CD4-positive, alpha-beta T cell (primary cell): ENCODE measurements at regions of chr16 and their contacts with region 1.

Region 1: DNA sequence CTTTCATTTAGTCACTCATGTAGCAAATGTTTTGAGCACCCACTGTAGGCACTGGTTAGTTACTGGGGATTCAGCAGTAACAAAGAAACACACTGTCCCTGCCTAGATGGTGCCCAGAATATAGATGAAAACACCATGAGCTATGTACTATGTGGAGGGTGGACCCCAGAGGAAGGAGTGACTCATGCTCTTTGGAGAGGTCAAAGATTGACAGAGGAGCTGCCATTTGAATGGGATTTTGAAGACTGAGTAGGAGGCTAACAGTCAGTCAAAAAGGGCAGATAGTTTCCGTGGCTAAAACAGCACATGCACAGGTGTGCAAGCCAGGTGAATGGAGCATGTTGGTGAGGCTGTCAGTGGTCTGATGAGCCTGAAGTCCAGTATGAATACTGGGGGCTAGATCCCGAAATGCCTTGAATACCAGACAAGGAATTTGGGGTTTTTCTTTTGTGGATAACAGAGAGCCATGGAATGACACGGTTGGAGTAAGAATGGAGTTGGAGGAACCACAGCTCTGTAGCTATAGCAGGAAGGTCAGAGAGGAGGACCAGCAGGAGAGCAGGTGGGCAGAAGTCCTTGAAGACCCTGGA is 6.1 kb downstream of the IL21R start:
- DNase-seq: peak in 6 of 14 experiments; percentile 20 to 57 (median 50)
- ATAC-seq: peak; percentile 24
- H3K4me3 ChIP-seq: peak overlapping the region; percentile 2
- H3K4me3 Mint-ChIP-seq: peak overlapping the region; percentile 72
- H3K27ac ChIP-seq: peak overlapping the region; percentile 9 to 39
- H3K27ac Mint-ChIP-seq: peak overlapping the region; percentile 90
- H3K4me1 ChIP-seq: peaks cover 56% of the 10 kb centered on the region
- H3K4me1 Mint-ChIP-seq: peaks cover 96% of the 10 kb centered on the region
- H3K27me3 ChIP-seq: no peaks in the 10 kb centered on the region
- H3K27me3 Mint-ChIP-seq: no peaks in the 10 kb centered on the region
- CTCF ChIP-seq: no peak

Region 2: DNA sequence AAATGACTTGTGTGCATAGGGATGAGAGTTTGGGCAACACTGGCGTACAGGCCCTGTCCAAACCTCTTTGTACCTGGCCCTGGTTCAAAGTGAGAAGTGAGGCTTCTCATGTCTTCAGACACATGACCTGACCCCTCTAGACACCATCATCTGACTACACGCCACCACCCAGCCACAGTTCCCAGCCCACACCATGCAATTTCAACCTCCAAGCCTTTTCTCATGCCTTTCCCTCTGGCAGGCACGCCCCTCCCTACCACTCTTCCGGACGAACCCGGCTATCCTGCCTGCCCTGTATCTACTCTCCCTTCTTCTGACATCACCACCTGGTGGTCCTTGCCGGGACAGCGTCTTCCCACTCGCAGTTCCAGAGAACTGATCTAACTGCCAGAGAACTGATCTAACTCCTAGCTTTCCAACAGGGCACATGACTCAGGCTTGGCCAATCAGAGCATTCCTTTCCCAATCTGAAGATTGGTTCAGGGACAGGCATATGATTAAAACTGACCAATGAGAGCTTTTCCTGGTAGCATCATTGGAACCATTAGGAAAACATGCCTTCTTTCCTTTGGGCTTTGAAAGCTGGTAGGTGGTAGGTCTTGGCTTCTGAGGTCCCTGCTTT is 33.2 kb before region 1 on chr16:
- CTCF ChIA-PET with region 1: no interaction called
- POLR2A ChIA-PET with region 1: interaction called, 134 read pairs
- intact Hi-C with region 1: loop called (anchors 2 kb)
- DNase-seq: peak in 9 of 14 experiments; percentile 23 to 71 (median 42)
- ATAC-seq: peak; percentile 52
- H3K4me3 ChIP-seq: no peak overlapping the region
- H3K4me3 Mint-ChIP-seq: no peak overlapping the region
- H3K27ac ChIP-seq: no peak overlapping the region
- H3K27ac Mint-ChIP-seq: no peak overlapping the region
- H3K4me1 ChIP-seq: peaks cover 76% of the 10 kb centered on the region
- H3K4me1 Mint-ChIP-seq: peaks cover 39% of the 10 kb centered on the region
- H3K27me3 ChIP-seq: no peaks in the 10 kb centered on the region
- H3K27me3 Mint-ChIP-seq: no peaks in the 10 kb centered on the region
- CTCF ChIP-seq: peak; percentile 29

Region 3: GRCh38 chr16:27426423-27427408 is 18.6 kb after region 1 on chr16:
- CTCF ChIA-PET with region 1: interaction called, 3 read pairs
- POLR2A ChIA-PET with region 1: interaction called, 8 read pairs
- intact Hi-C with region 1: loop called (anchors 1 to 2 kb)
- DNase-seq: peak; percentile 47 to 86 (median 76)
- ATAC-seq: peak; percentile 94
- H3K4me3 ChIP-seq: no peak overlapping the region
- H3K4me3 Mint-ChIP-seq: no peak overlapping the region
- H3K27ac ChIP-seq: peak overlapping the region; percentile 1 to 13
- H3K27ac Mint-ChIP-seq: peak overlapping the region; percentile 69
- H3K4me1 ChIP-seq: peaks cover 34% of the 10 kb centered on the region
- H3K4me1 Mint-ChIP-seq: peaks cover 61% of the 10 kb centered on the region
- H3K27me3 ChIP-seq: no peaks in the 10 kb centered on the region
- H3K27me3 Mint-ChIP-seq: no peaks in the 10 kb centered on the region
- CTCF ChIP-seq: no peak

Region 4: DNA sequence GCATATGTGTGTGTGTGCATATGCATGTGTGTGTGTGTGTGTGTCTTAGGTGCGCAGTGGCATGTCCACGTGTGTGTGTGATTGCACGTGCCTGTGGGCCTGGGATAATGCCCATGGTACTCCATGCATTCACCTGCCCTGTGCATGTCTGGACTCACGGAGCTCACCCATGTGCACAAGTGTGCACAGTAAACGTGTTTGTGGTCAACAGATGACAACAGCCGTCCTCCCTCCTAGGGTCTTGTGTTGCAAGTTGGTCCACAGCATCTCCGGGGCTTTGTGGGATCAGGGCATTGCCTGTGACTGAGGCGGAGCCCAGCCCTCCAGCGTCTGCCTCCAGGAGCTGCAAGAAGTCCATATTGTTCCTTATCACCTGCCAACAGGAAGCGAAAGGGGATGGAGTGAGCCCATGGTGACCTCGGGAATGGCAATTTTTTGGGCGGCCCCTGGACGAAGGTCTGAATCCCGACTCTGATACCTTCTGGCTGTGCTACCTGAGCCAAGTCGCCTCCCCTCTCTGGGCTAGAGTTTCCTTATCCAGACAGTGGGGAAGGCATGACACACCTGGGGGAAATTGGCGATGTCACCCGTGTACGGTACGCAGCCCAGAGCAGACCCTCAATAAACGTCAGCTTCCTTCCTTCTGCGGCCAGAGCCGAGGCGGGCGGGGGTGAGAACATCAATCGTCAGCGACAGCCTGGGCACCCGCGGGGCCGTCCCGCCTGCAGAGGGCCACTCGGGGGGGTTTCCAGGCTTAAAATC is 41.5 kb after region 1 on chr16:
- CTCF ChIA-PET with region 1: interaction called, 4 read pairs
- POLR2A ChIA-PET with region 1: interaction called, 15 read pairs
- intact Hi-C with region 1: loop called (anchors 2 kb)
- DNase-seq: peak; percentile 31 to 93 (median 60)
- ATAC-seq: peak; percentile 46
- H3K4me3 ChIP-seq: peak overlapping the region; percentile 10
- H3K4me3 Mint-ChIP-seq: peak overlapping the region; percentile 70
- H3K27ac ChIP-seq: peak overlapping the region in 1 of 2 donors; percentile 18
- H3K27ac Mint-ChIP-seq: peak overlapping the region; percentile 93
- H3K4me1 ChIP-seq: peaks cover 78% of the 10 kb centered on the region
- H3K4me1 Mint-ChIP-seq: peaks cover 81% of the 10 kb centered on the region
- H3K27me3 ChIP-seq: no peaks in the 10 kb centered on the region
- H3K27me3 Mint-ChIP-seq: no peaks in the 10 kb centered on the region
- CTCF ChIP-seq: no peak